Caco-2 (cell line): ENCODE measurements at regions of chr7 and their contacts with region 1.

Region 1: DNA sequence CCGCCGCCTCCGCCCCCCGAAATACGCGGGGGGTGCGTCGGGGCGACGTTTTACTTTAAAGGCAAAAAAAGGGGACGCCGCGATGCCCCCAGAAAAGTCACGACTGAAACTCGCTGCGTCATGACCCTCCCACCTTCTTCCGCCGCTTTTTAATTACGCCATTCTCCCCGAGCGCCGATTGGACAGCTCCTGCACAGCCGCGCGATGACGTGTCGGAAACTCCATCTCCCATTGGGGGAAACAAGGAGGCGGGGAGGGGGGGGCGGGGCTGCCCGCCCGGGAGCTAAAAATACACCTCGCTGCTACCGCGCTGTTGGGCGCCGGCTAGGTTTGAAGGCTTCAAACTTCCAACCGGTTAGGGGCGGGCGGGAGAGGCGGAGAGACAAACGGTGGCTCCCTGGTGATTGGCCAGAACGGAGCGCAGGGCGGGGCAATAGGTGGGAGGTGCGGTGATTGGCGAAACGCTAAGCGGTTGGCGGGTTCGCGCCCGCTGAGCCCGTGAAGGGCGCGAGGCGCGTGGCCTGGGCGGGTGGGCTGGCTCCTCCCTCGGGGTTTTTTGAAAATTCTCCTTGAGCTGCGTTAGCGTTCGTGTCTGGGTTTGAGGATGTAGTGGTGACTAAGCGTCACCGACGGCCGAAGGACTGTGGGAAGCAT is at the start of gene RHEB:
- DNase-seq: peak; percentile 99
- H3K4me3 ChIP-seq: peak within 1 kb of the TSS; percentile 70
- H3K4me3 Mint-ChIP-seq: peak within 1 kb of the TSS; percentile 91
- H3K27ac Mint-ChIP-seq: peak within 1 kb of the TSS; percentile 99
- H3K4me1 ChIP-seq: peaks cover 4% of the 10 kb centered on the region; the same call in 1 of the 2 replicates
- H3K4me1 Mint-ChIP-seq: peaks cover 24% of the 10 kb centered on the region
- H3K27me3 ChIP-seq: no peaks in the 10 kb centered on the region
- H3K27me3 Mint-ChIP-seq: no peaks in the 10 kb centered on the region
- CTCF ChIP-seq: no peak
- total RNA-seq, gene RHEB: 156 and 159 TPM in 2 replicates

Region 2: GRCh38 chr7:151368136-151368571 is 151.7 kb before region 1 on chr7:
- CTCF ChIA-PET with region 1: interaction called, 3 read pairs
- POLR2A ChIA-PET with region 1: no interaction called
- intact Hi-C with region 1: loop called (anchors 2 kb)
- DNase-seq: peak; percentile 89 to 90
- H3K4me3 ChIP-seq: no peak overlapping the region
- H3K4me3 Mint-ChIP-seq: no peak overlapping the region
- H3K27ac Mint-ChIP-seq: no peak overlapping the region
- H3K4me1 ChIP-seq: 0 out of 2 replicates have a peak, but pooled peaks cover 7% of the 10 kb centered on the region
- H3K4me1 Mint-ChIP-seq: no peaks in the 10 kb centered on the region
- H3K27me3 ChIP-seq: no peaks in the 10 kb centered on the region
- H3K27me3 Mint-ChIP-seq: no peaks in the 10 kb centered on the region
- CTCF ChIP-seq: peak; percentile 93 to 95

Region 3: DNA sequence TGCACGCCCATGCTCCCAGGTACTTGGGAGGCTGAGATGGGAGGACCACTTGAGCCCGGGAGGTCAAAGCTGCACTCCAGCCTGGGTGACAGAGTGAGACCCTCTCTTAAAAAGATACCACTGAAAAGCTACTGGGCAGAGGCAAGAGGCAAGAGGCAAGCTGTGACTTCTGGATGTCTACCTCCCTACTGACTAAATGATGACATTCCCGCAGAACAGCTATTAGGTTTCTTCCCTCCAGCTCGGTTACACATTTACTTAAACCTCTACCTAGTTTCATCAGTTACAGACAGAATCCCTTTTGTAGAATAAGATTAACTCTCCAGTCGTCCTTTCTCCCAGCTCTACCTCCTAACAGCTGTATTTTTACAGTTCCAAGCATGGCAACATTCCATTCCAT is 21.4 kb before region 1 on chr7:
- CTCF ChIA-PET with region 1: no interaction called
- POLR2A ChIA-PET with region 1: interaction called, 11 read pairs
- intact Hi-C with region 1: no loop called
- DNase-seq: no peak
- H3K4me3 ChIP-seq: no peak overlapping the region
- H3K4me3 Mint-ChIP-seq: no peak overlapping the region
- H3K27ac Mint-ChIP-seq: peak overlapping the region; percentile 28
- H3K4me1 ChIP-seq: peaks cover 52% of the 10 kb centered on the region
- H3K4me1 Mint-ChIP-seq: peaks cover 49% of the 10 kb centered on the region
- H3K27me3 ChIP-seq: no peaks in the 10 kb centered on the region
- H3K27me3 Mint-ChIP-seq: no peaks in the 10 kb centered on the region
- CTCF ChIP-seq: no peak

Region 4: DNA sequence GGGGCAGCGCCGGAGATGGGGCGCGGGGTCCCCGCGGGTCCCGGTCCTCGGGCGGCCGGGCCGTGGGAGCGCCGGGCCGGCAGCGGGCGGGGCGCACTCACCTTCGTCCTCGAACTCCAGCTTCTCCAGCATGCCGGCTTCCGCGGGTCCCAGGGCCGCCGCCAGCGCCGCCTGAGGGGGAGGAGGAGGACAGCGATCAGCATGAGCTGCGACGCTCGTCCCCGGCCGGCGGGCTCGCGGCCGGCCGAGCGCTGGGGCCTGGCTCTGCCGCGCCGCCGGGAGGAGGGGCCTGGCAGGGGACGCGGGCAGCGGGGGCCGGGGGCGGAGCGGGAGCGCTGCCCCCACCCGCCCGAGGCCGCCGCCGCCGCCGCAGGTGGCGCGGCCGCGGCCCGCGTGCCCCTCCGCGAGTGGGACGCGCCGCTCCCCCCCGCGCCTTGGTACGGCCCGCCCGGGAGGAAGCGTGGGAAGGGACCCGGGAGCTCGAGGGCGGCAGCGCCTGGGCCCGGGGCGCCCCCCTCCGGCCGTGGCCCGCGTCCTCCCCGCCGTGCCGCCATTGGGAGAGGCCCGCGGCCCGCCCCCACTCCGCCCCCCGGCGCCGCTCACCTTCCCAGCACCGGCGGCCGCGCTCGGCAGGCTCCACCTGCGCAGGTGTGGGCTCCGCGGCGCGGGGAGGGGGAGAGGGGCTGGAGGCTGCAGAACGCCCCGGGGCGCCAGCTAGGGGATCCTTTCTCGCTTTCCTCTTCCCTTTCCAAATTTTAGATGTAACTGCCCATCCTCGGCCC is 112.3 kb after region 1 on chr7:
- CTCF ChIA-PET with region 1: interaction called, 3 read pairs
- POLR2A ChIA-PET with region 1: interaction called, 11 read pairs
- intact Hi-C with region 1: loop called (anchors 1 kb)
- DNase-seq: peak; percentile 89 to 94
- H3K4me3 ChIP-seq: peak overlapping the region; percentile 85
- H3K4me3 Mint-ChIP-seq: peak overlapping the region; percentile 88
- H3K27ac Mint-ChIP-seq: peak overlapping the region; percentile 62
- H3K4me1 ChIP-seq: peaks cover 11% of the 10 kb centered on the region
- H3K4me1 Mint-ChIP-seq: peaks cover 6% of the 10 kb centered on the region
- H3K27me3 ChIP-seq: no peaks in the 10 kb centered on the region
- H3K27me3 Mint-ChIP-seq: no peaks in the 10 kb centered on the region
- CTCF ChIP-seq: peak; percentile 42 to 50

Region 5: GRCh38 chr7:151754142-151754590 is 234.3 kb after region 1 on chr7:
- CTCF ChIA-PET with region 1: no interaction called
- POLR2A ChIA-PET with region 1: interaction called, 3 read pairs
- intact Hi-C with region 1: loop called (anchors 1 kb)
- DNase-seq: peak; percentile 90 to 91
- H3K4me3 ChIP-seq: no peak overlapping the region
- H3K4me3 Mint-ChIP-seq: no peak overlapping the region
- H3K27ac Mint-ChIP-seq: peak overlapping the region; percentile 77
- H3K4me1 ChIP-seq: peaks cover 17% of the 10 kb centered on the region
- H3K4me1 Mint-ChIP-seq: peaks cover 20% of the 10 kb centered on the region
- H3K27me3 ChIP-seq: no peaks in the 10 kb centered on the region
- H3K27me3 Mint-ChIP-seq: no peaks in the 10 kb centered on the region
- CTCF ChIP-seq: peak; percentile 86 to 95